ENCODE measurements at regions of chr16 and their contacts with region 1.

Region 1: DNA sequence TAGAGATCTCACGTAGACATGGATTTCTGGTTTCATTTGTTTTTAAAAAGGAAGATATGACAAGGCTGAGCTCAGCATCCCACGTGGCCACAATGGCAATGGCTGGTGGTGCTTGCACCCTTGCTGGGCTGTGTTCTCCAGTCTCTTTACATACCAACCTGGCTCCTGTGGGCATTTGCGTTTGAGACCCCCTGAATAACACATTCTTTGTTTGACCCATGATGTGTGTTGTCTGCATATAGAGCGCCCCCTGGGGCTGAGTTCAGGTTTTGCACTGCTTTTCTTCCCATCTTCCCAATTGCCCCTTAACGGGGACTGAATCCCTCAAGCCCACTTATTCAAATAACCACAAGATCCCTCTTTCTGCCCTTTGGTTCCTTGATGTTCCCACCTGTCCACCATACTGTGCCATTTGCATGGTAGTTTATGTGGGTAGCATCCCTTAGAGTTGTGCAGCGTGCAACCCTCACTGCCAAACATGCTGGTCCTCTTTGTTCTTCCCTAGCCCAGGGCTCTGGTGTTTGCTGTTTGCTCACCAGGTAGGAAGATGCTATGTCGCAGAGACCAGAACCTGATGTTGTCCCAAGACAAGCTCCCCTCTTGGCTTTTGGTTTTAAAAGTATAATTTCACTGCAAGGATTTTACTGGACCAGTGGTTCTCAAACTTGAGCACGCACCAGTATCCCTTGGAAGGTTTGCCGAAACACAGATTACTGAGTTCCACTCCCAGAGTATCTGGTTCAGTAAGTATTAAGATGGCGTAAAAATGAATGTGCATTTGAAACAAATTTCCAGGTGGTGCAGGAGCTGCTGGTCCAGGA is 38.5 kb upstream of the NKD1 start:
- DNase-seq: peak; percentile 50
- ATAC-seq: no peak
- H3K4me3 ChIP-seq: peak overlapping the region in 2 of 3 experiments; percentile 19 to 21; a peak in 3 of 6 replicates
- H3K27ac ChIP-seq: no peak overlapping the region
- H3K4me1 ChIP-seq: peaks cover 92% of the 10 kb centered on the region
- H3K27me3 ChIP-seq: no peaks in the 10 kb centered on the region
- CTCF ChIP-seq: peak; percentile 76
- EP300 ChIP-seq: no peak
- POLR2A ChIP-seq: no peak
- RAD21 ChIP-seq: peak; percentile 83

Region 2: DNA sequence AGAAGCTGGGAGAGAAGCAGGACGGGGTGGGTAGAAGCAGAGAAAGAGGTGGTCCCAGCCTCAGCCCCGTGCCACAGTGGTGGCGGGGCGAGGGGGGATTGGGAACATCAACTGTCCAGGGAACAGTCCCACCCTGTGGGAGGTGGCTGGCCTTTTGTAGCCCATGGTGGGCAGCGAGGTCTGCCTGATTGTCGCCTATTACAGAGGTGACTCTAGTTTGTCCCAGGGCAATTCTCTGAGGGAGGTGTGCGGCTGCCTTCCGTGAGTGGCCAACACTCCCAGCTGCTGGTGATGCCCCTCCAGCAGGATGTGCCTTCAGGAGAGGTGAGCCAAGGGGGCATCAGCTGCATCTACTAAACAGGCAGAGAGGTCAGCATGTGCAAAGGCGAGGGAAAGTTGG is 136.0 kb before region 1 on chr16:
- CTCF ChIA-PET with region 1: interaction called, 6 read pairs
- POLR2A ChIA-PET with region 1: interaction called, 5 read pairs
- in situ Hi-C with region 1: loop called (anchors 5 kb)
- intact Hi-C with region 1: loop called (anchors 1 kb)
- DNase-seq: no peak
- ATAC-seq: no peak
- H3K4me3 ChIP-seq: no peak overlapping the region
- H3K27ac ChIP-seq: no peak overlapping the region
- H3K4me1 ChIP-seq: peaks cover 61% of the 10 kb centered on the region
- H3K27me3 ChIP-seq: no peaks in the 10 kb centered on the region
- CTCF ChIP-seq: no peak
- EP300 ChIP-seq: no peak
- POLR2A ChIP-seq: no peak
- RAD21 ChIP-seq: no peak

Region 3: GRCh38 chr16:50467943-50468760 is 41.6 kb before region 1 on chr16:
- CTCF ChIA-PET with region 1: no interaction called
- POLR2A ChIA-PET with region 1: interaction called, 62 read pairs
- in situ Hi-C with region 1: loop called (anchors 5 kb)
- intact Hi-C with region 1: loop called (anchors 5 kb)
- DNase-seq: peak; percentile 97
- ATAC-seq: peak; percentile 89
- H3K4me3 ChIP-seq: peak overlapping the region in 2 of 3 experiments; percentile 11 to 24; a peak in 2 of 6 replicates
- H3K27ac ChIP-seq: peak overlapping the region; percentile 92
- H3K4me1 ChIP-seq: peaks cover 91% of the 10 kb centered on the region
- H3K27me3 ChIP-seq: no peaks in the 10 kb centered on the region
- CTCF ChIP-seq: peak; percentile 49
- EP300 ChIP-seq: peak; percentile 97 to 100
- POLR2A ChIP-seq: peak; percentile 63 to 67
- RAD21 ChIP-seq: peak; percentile 81

Region 4: GRCh38 chr16:50520451-50521245 is 10.9 kb after region 1 on chr16:
- CTCF ChIA-PET with region 1: no interaction called
- POLR2A ChIA-PET with region 1: interaction called, 143 read pairs
- in situ Hi-C with region 1: no loop called
- intact Hi-C with region 1: loop called (anchors 2 kb)
- DNase-seq: peak; percentile 99
- ATAC-seq: peak; percentile 94
- H3K4me3 ChIP-seq: no peak overlapping the region; a peak in 1 of 6 replicates
- H3K27ac ChIP-seq: peak overlapping the region; percentile 89
- H3K4me1 ChIP-seq: peaks cover 65% of the 10 kb centered on the region
- H3K27me3 ChIP-seq: no peaks in the 10 kb centered on the region
- CTCF ChIP-seq: no peak
- EP300 ChIP-seq: peak; percentile 98 to 100; a peak in 3 of 4 replicates
- POLR2A ChIP-seq: peak in 1 of 2 experiments; percentile 32; a peak in 2 of 4 replicates
- RAD21 ChIP-seq: no peak

Region 5: DNA sequence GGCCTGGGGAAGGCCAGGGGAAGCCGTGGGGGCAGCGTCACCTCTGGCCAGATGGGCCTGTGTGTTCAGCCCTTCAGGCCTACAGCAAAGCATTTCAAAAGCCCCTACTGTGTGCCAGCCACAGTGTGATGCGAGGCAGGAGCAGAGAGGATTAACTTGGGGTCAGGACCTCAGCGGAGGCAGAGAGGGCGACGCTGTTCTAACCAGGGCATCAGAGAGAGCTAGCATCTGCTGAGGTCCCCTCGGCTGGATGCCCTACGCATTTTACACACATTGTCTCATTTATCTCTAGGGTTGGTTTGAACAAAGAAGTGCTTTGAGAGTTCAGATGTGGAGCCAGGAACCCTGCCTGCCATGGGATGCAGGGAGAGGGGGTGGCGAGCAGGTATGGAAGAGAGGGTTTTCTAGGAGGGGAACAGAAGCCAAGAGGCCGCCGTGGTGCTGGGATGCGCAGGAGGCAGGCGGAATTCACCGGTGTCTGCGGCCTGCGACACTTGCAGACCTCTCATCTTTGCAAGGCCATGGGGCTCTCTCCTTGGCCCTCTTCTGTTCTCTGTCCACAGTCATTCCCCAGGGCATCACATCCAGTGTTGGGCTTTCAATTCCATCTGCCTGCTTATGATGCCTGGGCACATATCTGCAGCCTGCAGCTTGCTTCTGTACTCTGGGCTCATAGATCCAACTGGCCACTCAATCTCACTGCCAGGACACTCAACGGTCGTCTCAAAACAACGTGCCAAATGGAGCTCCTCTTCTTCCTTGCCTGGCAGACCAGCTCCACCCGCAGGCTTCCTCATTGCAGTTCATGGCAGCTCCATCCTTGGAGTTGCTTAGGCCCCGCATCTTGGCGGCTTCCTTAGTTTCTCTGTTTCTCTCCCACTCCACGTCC is 30.3 kb after region 1 on chr16:
- CTCF ChIA-PET with region 1: no interaction called
- POLR2A ChIA-PET with region 1: interaction called, 26 read pairs
- in situ Hi-C with region 1: no loop called
- intact Hi-C with region 1: loop called (anchors 5 kb)
- DNase-seq: peak; percentile 52
- ATAC-seq: peak; percentile 12
- H3K4me3 ChIP-seq: 0 out of 6 replicates have a peak overlapping the region, but pooled peaks of 1 of the 3 experiments have one; percentile 17
- H3K27ac ChIP-seq: peak overlapping the region; percentile 88
- H3K4me1 ChIP-seq: peaks cover 72% of the 10 kb centered on the region
- H3K27me3 ChIP-seq: no peaks in the 10 kb centered on the region
- CTCF ChIP-seq: peak; percentile 72
- EP300 ChIP-seq: no peak
- POLR2A ChIP-seq: peak in 1 of 2 experiments; percentile 57; a peak in 1 of 4 replicates
- RAD21 ChIP-seq: peak; percentile 72